Mammary epithelial cell (primary cell): ENCODE measurements at regions of chr12 and their contacts with region 1.

Region 1: GRCh38 chr12:93591137-93591868 is 18.8 kb downstream of the SOCS2 start:
- DNase-seq: peak; percentile 76
- H3K4me3 ChIP-seq: peak overlapping the region; percentile 66 to 99 (median 68)
- H3K27ac ChIP-seq: peak overlapping the region; percentile 87
- H3K4me1 ChIP-seq: no peaks in the 10 kb centered on the region
- H3K27me3 ChIP-seq: no peaks in the 10 kb centered on the region
- CTCF ChIP-seq: no peak

Region 2: DNA sequence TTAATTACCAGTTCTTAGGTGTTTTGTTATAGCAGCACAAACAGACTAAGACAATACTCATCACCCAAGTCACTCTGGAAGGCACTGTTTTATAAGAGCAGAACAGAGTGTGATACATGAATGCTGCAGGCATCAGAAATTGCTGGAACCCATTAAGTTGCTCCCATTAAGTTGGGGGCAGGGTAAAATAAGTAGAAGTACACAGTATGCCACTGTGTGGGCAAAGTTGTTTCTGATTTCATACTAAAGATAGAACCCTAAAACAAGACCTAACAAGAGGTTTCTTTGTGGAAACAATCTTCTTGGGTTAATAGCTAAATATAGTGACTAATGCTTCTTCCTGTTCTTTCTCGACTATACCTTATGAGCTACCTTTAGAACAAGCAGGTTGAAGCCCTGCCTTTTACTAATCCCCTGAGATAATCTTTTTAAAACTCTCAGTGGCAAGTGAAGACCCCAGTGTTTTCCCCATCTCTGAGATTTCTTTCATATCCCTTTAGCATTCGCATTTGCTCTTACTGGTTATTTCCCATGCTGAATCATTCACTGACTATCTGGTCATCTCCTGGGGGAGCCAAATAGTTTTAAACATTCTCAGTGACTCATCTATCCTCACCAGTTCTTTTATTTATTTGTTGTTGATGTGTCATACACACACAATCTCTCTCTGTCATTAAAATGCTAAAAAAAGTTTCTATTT is 33.4 kb after region 1 on chr12:
- CTCF ChIA-PET with region 1: no interaction called
- dilution Hi-C with region 1: no loop called
- in situ Hi-C with region 1: no loop called
- intact Hi-C with region 1: loop called (anchors 2 kb)
- DNase-seq: peak; percentile 97
- H3K4me3 ChIP-seq: peak overlapping the region in 2 of 3 experiments; percentile 11 to 21
- H3K27ac ChIP-seq: peak overlapping the region; percentile 99
- H3K4me1 ChIP-seq: peaks cover 18% of the 10 kb centered on the region
- H3K27me3 ChIP-seq: no peaks in the 10 kb centered on the region
- CTCF ChIP-seq: no peak

Region 3: DNA sequence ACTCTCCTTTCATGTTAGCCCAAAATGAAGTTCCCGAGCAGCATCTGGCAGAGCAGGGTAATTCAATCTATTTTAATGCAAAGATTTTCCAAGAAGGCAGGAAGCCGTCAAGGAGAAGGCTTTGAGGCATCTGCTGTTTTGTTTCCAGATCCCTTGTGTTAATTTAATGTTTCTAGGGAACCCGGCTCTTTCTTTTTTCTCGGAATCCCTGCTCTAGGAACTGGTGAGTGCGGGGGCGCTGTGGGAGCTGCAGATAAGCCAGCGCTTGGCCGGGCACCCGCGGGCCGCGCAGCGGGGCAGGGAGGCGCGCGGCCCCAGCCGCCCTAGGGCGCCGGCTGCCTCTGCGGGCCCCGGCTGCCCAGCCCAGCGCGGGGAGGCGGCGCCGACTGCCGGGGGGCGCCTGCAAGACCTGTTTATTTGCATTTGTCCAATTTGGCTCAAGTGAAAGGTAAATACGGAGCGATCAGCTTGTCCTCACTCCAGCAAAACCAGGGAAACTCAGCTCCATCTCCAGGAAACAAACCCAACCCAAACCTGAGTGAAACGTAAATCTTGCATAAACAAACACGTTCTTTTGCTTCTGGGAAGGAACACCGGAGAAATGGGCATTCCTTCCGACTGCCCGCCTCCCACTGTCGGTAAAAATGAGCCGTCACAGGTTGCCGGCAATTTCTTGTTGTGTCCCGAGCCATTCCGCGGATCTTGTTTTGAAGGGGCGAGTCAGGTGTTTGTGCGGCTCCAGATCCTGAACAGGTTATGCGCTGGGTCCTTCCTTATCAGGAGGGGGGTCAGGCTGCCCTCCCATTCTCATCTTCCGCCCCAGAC is 151.0 kb after region 1 on chr12:
- CTCF ChIA-PET with region 1: no interaction called
- dilution Hi-C with region 1: no loop called
- in situ Hi-C with region 1: no loop called
- intact Hi-C with region 1: loop called (anchors 1 kb)
- DNase-seq: peak; percentile 65
- H3K4me3 ChIP-seq: peak overlapping the region; percentile 55 to 74 (median 60)
- H3K27ac ChIP-seq: peak overlapping the region; percentile 81
- H3K4me1 ChIP-seq: peaks cover 16% of the 10 kb centered on the region
- H3K27me3 ChIP-seq: no peaks in the 10 kb centered on the region
- CTCF ChIP-seq: peak; percentile 12 to 48

Region 4: DNA sequence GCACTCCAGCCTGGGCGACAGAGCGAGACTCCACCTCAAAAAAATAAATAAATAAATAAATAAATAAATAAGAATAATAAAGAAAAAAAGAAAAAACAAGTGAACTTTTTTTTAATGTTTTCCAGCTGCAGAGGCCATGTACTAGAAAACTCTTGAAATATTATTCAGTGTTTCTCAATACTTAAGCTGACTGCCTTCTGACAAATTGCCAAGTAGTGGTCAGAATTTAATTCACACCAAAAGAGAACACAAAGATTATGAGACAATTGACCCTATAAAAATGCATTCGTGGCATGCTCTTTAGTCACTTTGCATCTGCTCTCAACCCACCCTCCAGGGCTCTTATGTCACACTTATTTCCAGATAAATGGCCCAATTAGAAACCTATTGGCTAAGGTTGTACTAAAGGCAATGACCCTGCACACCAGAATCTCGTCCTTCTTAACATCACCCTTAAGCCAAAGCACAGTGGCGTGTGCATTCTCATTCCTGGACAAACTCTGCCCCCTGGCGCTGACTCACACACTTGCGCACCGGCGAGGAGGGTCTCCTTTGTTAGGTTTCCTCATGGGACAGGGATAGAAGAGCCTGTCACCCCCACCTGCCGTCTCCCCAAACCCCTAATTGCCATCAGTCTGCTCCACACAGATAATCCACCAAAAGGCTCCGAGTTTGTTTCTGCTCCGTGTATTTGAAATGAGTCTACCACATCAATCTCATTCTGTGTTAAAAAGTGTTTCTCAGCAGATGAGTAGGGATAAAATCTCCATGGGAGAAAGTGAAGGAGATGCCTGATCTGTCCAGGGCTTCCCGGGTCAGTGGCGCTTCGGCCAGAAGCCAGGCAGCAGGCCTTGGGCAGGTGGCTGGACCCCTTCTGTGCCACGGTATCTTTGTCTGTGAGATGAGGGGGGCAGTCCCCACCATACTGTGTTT is 941.5 kb after region 1 on chr12:
- CTCF ChIA-PET with region 1: no interaction called
- dilution Hi-C with region 1: no loop called
- in situ Hi-C with region 1: no loop called
- intact Hi-C with region 1: no loop called
- DNase-seq: peak; percentile 32
- H3K4me3 ChIP-seq: no peak overlapping the region
- H3K27ac ChIP-seq: no peak overlapping the region
- H3K4me1 ChIP-seq: no peaks in the 10 kb centered on the region
- H3K27me3 ChIP-seq: no peaks in the 10 kb centered on the region
- CTCF ChIP-seq: peak; percentile 64 to 80